Activated CD4-positive, alpha-beta T cell treated with anti-CD3 and anti-CD28 coated beads, Interleukin-2, amount 10 ng/mL, durations not matched to agents 7 days and 5 days (primary cell): ENCODE measurements at regions of chr13 and their contacts with region 1.

Region 1: DNA sequence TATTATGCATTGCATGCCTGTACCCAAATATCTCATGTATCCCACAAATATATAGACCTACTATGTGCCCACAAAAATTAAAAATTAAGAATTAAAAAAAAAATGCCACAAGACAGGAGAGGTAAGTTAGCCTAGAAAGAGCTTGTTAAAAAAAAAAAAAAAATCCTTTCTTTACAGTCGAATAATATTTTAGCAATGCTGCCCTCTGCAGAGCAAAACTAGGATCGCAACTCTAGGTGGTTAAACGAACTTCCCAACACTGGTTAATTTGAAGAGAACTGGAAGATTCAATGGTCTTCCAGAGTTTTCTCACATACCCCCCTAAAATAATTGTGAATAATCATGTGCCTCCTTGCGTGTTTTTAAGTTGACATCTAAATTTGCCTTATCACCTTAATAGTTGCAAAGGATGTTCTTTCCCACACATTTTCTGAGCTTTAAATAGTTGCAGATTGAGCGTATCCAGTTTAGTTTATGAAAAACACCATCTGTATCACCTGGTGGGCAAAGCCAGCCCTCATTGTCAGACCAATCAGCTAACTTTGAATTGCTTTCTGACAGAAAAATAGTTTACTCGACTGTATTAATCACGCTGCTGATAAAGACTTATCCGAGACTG is 47.4 kb upstream of the RCBTB2 start:
- DNase-seq: peak; percentile 79
- H3K4me3 Mint-ChIP-seq: no peak overlapping the region
- H3K27ac Mint-ChIP-seq: no peak overlapping the region
- H3K4me1 Mint-ChIP-seq: peaks cover 52% of the 10 kb centered on the region
- H3K27me3 Mint-ChIP-seq: peaks cover 36% of the 10 kb centered on the region

Region 2: GRCh38 chr13:48334534-48335127 is 245.7 kb before region 1 on chr13:
- CTCF ChIA-PET with region 1: interaction called, 30 read pairs
- POLR2A ChIA-PET with region 1: no interaction called
- DNase-seq: peak; percentile 31
- H3K4me3 Mint-ChIP-seq: no peak overlapping the region
- H3K27ac Mint-ChIP-seq: no peak overlapping the region
- H3K4me1 Mint-ChIP-seq: peaks cover 28% of the 10 kb centered on the region
- H3K27me3 Mint-ChIP-seq: no peaks in the 10 kb centered on the region

Region 3: DNA sequence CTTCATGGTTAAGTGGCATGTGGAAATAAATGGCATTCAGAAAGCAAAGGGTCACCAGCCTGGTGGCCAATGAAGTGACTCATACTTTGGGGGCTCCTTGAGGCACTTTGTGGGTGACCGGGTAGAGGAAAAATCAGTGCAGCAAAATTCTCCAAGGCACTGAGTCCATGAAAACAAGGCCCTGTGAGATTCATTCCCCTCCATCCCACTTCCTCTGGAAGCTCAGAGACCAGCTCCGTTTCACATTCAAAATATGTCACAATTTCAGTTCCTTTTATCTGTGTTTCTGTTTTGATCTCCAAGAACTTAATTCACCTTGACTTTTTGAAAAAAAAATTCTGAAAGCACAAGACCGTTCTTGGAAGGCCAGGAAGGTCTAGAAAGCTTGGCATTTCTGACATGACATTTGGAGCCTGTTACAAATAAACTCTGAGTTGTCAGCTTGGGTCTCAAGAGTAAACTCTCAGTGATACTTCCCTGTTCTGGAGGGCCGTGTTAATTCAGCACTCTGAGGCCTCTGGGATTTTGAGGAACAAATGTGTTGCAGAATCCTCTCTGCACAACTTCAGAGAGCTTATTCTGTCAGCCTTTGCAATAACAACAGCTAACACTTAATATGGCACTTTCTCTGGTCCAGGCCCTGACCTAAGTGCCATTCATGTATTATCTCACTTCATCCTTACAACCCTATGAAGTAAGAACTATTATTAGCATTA is 80.2 kb after region 1 on chr13:
- CTCF ChIA-PET with region 1: no interaction called
- POLR2A ChIA-PET with region 1: no interaction called
- DNase-seq: no peak
- H3K4me3 Mint-ChIP-seq: no peak overlapping the region
- H3K27ac Mint-ChIP-seq: no peak overlapping the region
- H3K4me1 Mint-ChIP-seq: peaks cover 17% of the 10 kb centered on the region
- H3K27me3 Mint-ChIP-seq: no peaks in the 10 kb centered on the region